ENCODE measurements at regions of chr16 and their contacts with region 1.

Region 1: GRCh38 chr16:106623-107324 is 28.7 kb downstream of the MPG start:
- DNase-seq: no peak
- ATAC-seq: peak; percentile 81
- H3K4me3 Mint-ChIP-seq: no peak overlapping the region
- H3K27ac Mint-ChIP-seq: no peak overlapping the region
- H3K4me1 Mint-ChIP-seq: no peaks in the 10 kb centered on the region
- H3K27me3 Mint-ChIP-seq: no peaks in the 10 kb centered on the region
- CTCF ChIP-seq: no peak

Region 2: DNA sequence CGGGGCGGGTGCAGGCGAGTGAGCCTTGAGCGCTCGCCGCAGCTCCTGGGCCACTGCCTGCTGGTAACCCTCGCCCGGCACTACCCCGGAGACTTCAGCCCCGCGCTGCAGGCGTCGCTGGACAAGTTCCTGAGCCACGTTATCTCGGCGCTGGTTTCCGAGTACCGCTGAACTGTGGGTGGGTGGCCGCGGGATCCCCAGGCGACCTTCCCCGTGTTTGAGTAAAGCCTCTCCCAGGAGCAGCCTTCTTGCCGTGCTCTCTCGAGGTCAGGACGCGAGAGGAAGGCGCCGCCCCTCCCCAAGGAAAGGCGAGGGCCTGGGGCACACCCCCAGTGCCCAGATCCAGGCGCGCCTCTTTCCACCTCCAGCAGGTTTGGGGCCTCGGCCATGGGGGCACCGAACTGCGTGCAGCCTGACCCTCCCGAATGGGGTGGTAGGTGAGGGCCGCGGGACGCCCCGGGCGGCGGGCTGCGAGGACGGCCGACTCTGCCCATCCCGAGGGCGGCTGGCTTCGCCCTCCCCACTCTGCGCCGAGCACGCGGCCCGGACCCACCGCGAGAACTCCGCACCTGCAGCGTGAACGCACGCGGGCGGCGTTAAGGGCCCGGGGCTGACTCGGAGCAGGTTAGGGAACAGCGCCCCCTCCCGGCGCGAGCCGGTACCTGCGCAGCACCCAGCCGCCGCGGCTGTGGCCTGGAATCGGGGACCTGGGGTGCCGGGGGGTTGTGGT is 74.3 kb after region 1 on chr16:
- CTCF ChIA-PET with region 1: interaction called, 3 read pairs
- POLR2A ChIA-PET with region 1: no interaction called
- intact Hi-C with region 1: loop called (anchors 1 kb)
- DNase-seq: peak; percentile 79
- ATAC-seq: peak; percentile 83
- H3K4me3 Mint-ChIP-seq: peak overlapping the region; percentile 19
- H3K27ac Mint-ChIP-seq: no peak overlapping the region
- H3K4me1 Mint-ChIP-seq: peaks cover 10% of the 10 kb centered on the region
- H3K27me3 Mint-ChIP-seq: peaks cover 11% of the 10 kb centered on the region
- CTCF ChIP-seq: peak; percentile 84

Region 3: GRCh38 chr16:361872-362701 is 255.3 kb after region 1 on chr16:
- CTCF ChIA-PET with region 1: interaction called, 20 read pairs
- POLR2A ChIA-PET with region 1: interaction called, 4 read pairs
- intact Hi-C with region 1: loop called (anchors 1 kb)
- DNase-seq: peak; percentile 57
- ATAC-seq: peak; percentile 92
- H3K4me3 Mint-ChIP-seq: no peak overlapping the region
- H3K27ac Mint-ChIP-seq: no peak overlapping the region
- H3K4me1 Mint-ChIP-seq: peaks cover 3% of the 10 kb centered on the region
- H3K27me3 Mint-ChIP-seq: peaks cover 5% of the 10 kb centered on the region
- CTCF ChIP-seq: peak; percentile 45